Activated CD8-positive, alpha-beta T cell treated with anti-CD3 and anti-CD28 coated beads for 36 hours (primary cell): ENCODE measurements at regions of chr9 and their contacts with region 1.

Region 1: DNA sequence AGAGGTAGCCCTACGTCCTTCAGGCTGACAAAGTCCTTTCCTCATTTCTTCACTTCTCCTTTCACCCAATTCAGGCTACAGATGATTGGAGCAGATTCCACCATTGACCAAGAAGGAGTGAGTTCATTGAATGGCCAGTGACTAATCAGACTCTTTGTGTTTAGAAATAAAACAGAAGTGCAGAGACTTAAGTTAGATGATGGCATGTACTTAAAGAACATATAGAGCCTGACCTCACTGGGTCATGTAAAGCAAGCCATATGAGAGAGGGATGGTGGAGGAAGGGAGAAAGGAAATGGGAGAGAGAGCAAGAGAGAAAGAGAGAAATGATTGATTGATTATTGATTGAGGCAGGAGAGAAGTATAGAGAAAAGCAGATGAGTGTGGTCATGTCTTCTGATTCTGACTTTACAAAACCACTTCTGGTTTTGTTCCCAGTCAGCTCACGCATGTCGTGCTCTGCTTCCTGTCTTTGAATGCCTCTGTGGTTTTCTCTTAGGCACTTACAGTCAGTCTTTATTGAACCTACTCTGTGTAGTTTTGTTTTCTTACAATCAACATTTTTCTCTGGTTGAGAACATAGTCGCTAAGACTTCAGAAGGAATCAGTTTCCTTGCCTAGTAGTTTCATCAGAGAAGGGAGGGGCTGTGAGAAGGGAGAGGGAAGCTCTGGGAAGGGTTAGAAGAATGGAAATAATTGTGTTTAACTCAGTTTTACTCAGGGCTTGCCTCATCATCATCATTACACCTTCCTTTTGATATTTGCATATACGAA is 149.2 kb upstream of the KLF9 start:
- DNase-seq: peak; percentile 78
- ATAC-seq: peak; percentile 87
- H3K4me3 Mint-ChIP-seq: peak overlapping the region; percentile 63
- H3K27ac Mint-ChIP-seq: peak overlapping the region; percentile 96
- H3K4me1 Mint-ChIP-seq: peaks cover 46% of the 10 kb centered on the region
- H3K27me3 Mint-ChIP-seq: no peaks in the 10 kb centered on the region
- CTCF ChIP-seq: no peak

Region 2: GRCh38 chr9:70419546-70420266 is 143.9 kb before region 1 on chr9:
- CTCF ChIA-PET with region 1: interaction called, 4 read pairs
- POLR2A ChIA-PET with region 1: interaction called, 22 read pairs
- intact Hi-C with region 1: loop called (anchors 2 kb)
- DNase-seq: peak; percentile 94
- ATAC-seq: peak; percentile 52
- H3K4me3 Mint-ChIP-seq: peak overlapping the region; percentile 81
- H3K27ac Mint-ChIP-seq: peak overlapping the region; percentile 96
- H3K4me1 Mint-ChIP-seq: peaks cover 48% of the 10 kb centered on the region
- H3K27me3 Mint-ChIP-seq: no peaks in the 10 kb centered on the region
- CTCF ChIP-seq: no peak